Mammary epithelial cell (primary cell): ENCODE measurements at regions of chr6 and their contacts with region 1.

Region 1: DNA sequence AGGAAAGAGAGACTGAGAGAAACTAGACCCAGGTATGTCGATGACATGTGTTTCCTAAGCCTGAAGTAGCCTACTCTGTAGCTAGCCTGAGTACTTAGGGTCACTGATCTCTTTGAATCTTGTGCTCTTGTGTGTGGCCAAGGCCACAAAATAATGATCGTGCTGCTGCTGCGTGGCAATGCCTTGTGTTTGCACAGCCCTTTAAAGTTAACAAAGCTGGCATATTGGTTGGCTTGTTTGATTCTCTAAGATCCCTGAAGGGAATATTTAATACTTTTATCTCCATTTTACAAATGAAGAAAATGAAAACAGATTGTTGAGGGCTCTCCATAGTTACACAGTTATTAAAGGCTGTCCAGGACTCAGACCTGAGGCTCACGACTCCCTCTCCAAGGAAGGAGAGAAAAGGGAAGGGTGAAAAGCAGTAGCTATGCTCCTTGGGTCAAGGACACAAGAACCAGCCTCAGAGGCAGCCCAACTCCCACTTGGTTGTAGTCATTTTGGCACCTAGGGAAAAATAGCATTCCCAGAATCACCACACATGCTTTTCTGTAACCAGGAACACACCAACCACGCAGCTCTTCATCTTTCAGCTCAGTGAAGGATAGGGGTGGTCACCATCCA is 130.7 kb downstream of the LRFN2 start:
- DNase-seq: no peak
- H3K4me3 ChIP-seq: no peak overlapping the region
- H3K27ac ChIP-seq: no peak overlapping the region
- H3K4me1 ChIP-seq: no peaks in the 10 kb centered on the region
- H3K27me3 ChIP-seq: no peaks in the 10 kb centered on the region
- CTCF ChIP-seq: no peak

Region 2: GRCh38 chr6:40440053-40440452 is 16.4 kb before region 1 on chr6:
- CTCF ChIA-PET with region 1: no interaction called
- dilution Hi-C with region 1: no loop called
- in situ Hi-C with region 1: no loop called
- intact Hi-C with region 1: loop called (anchors 1 kb)
- DNase-seq: peak; percentile 81
- H3K4me3 ChIP-seq: no peak overlapping the region
- H3K27ac ChIP-seq: no peak overlapping the region
- H3K4me1 ChIP-seq: peaks cover 25% of the 10 kb centered on the region
- H3K27me3 ChIP-seq: no peaks in the 10 kb centered on the region
- CTCF ChIP-seq: no peak

Region 3: DNA sequence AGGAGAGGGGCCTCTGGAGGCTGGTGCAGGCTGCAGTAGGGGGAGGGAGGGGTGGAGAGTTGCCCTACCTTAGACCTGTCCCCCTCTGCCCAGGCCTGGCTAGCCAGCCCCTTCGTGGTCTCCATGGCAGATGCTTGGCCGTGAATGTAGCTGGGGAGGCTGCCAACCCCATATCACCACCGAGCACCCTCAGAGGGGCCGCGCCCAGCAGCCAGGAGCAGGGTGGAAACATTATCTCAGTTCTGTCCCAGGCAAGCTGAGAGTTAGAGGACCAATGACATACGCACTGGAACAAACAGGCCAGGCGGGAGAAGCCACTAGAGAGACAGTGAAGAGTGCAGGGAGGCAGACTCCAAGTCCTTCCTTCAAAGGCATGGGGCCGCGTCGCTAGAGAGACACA is 64.2 kb after region 1 on chr6:
- CTCF ChIA-PET with region 1: no interaction called
- dilution Hi-C with region 1: loop called (anchors 5 kb)
- in situ Hi-C with region 1: no loop called
- intact Hi-C with region 1: no loop called
- DNase-seq: no peak
- H3K4me3 ChIP-seq: no peak overlapping the region
- H3K27ac ChIP-seq: no peak overlapping the region
- H3K4me1 ChIP-seq: peaks cover 5% of the 10 kb centered on the region
- H3K27me3 ChIP-seq: no peaks in the 10 kb centered on the region
- CTCF ChIP-seq: no peak